BJ (cell line): ENCODE measurements at regions of chr1 and their contacts with region 1.

Region 1: DNA sequence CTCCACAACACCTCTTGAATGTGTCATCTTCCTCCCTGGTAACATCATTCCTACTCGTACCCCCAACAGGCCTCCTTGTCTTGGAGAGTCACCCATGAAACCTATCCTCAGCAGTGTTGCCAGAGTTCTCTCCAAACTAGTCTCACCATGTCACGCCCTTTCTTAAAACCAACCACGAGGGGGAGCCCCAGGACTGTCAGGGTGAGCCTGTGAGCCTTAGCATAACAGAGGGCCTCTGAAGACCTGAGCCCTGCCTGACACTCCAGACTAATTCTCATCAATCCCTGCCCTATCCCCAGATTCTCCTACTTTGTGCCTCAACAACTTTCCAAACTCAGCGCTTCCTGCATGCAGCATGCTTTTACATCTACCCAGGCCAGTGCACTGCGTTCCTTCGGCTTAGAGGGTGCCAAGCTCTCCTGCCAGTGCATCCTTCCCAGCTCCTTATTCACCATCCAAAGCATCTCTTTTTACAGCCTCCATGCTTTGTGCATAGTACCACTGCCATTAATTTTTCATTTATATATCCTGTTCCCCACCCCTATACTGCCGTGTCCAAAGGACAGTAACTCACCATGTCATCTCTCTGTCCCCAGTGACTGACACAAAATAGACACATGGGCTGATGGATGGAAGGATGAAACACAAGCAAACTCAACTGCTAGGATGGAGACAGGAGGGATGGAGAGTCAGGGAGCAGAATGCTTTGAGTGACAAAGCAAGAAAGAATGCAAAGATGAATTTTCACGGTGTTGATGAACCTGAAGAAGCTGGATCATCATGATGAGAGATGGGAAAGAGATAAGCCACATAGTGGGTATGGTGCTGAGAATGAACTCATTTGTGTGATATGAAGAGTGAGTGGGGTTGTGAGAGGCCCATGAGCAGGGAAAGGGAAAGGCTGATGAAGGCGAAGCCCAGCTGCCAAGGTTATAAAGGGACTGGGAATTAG is 34.0 kb downstream of the ZNF697 start:
- DNase-seq: no peak
- H3K4me3 ChIP-seq: no peak overlapping the region
- H3K27me3 ChIP-seq: no peaks in the 10 kb centered on the region
- CTCF ChIP-seq: peak; percentile 77

Region 2: GRCh38 chr1:119603695-119604094 is 10.3 kb before region 1 on chr1:
- CTCF ChIA-PET with region 1: interaction called, 19 read pairs
- POLR2A ChIA-PET with region 1: interaction called, 3 read pairs
- DNase-seq: no peak
- H3K4me3 ChIP-seq: no peak overlapping the region
- H3K27me3 ChIP-seq: no peaks in the 10 kb centered on the region
- CTCF ChIP-seq: no peak

Region 3: GRCh38 chr1:119639109-119639508 is 25.1 kb after region 1 on chr1:
- CTCF ChIA-PET with region 1: no interaction called
- POLR2A ChIA-PET with region 1: interaction called, 16 read pairs
- DNase-seq: no peak
- H3K4me3 ChIP-seq: no peak overlapping the region
- H3K27me3 ChIP-seq: no peaks in the 10 kb centered on the region
- CTCF ChIP-seq: no peak

Region 4: DNA sequence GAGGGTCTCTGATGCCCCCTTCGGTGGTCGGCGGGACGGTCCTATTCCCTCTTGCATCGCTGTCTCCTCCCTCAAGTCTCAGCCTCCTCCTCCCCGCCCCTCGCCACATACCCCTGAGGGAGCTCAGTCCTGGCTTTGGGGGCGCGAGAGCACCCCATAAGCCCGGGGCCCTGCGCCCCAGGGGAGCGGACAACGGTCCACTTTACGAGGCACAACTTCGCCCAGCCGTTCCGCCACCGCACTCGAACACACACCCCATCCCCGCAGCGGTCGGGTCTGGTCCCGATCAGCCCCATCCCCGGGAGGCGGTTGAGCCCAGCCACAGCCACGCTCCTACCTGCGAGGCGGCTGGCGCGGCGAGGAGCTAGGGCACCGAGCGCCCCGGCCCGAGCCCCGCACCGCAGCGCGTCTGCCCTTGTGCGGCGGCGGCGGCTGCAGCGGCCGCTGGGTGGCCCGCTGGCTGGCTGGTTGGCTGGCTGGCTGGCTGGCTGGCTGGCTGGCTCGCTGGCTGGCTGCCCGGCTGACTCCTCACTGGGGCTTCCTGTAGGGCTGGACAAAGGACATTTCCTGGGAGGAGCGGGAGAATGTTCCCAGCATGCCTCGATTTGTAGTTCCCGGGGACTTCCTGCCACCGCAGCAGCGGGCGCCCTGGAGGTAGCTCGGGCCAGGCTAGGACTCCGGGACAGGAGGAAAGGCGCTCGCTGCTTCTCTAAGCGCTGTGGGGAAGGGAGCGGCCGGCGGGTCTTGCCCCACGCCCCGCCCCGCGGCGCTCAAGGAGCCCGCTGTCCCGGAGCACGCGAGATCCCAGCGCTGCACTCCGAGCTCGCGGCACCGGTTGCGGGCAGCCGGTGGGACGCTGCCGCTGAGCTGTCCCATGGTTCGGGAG is 33.9 kb after region 1 on chr1 and contains the start of gene ZNF697:
- CTCF ChIA-PET with region 1: interaction called, 17 read pairs
- POLR2A ChIA-PET with region 1: interaction called, 4 read pairs
- DNase-seq: peak; percentile 90
- H3K4me3 ChIP-seq: peak within 1 kb of the TSS; percentile 85
- H3K27me3 ChIP-seq: no peaks in the 10 kb centered on the region
- CTCF ChIP-seq: peak; percentile 51; the same call in 1 of the 2 replicates
- polyA plus RNA-seq, gene ZNF697: 3.2 and 5.7 TPM in 2 replicates

Region 5: GRCh38 chr1:119656410-119656955 is 42.4 kb after region 1 on chr1:
- CTCF ChIA-PET with region 1: interaction called, 120 read pairs
- POLR2A ChIA-PET with region 1: no interaction called
- DNase-seq: no peak
- H3K4me3 ChIP-seq: no peak overlapping the region
- H3K27me3 ChIP-seq: no peaks in the 10 kb centered on the region
- CTCF ChIP-seq: no peak

Region 6: GRCh38 chr1:119662034-119662437 is 48.0 kb after region 1 on chr1:
- CTCF ChIA-PET with region 1: interaction called, 120 read pairs
- POLR2A ChIA-PET with region 1: no interaction called
- DNase-seq: no peak
- H3K4me3 ChIP-seq: no peak overlapping the region
- H3K27me3 ChIP-seq: no peaks in the 10 kb centered on the region
- CTCF ChIP-seq: no peak

Region 7: DNA sequence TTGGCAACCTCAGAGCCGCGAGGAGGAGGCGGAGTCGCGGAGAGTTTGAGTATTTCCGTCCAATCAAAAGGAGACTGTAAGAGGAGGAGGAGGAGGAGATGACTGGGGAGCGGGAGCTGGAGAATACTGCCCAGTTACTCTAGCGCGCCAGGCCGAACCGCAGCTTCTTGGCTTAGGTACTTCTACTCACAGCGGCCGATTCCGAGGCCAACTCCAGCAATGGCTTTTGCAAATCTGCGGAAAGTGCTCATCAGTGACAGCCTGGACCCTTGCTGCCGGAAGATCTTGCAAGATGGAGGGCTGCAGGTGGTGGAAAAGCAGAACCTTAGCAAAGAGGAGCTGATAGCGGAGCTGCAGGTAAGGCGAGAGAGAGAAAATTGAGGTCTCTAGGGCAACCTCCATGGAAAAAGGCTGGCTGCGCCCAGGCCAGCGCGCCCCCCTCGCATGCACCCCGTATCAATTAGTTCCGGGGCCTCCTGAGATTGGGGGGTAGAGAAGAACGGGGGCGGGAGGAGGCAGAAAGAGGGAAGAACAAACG is 97.8 kb after region 1 on chr1 and contains the start of gene PHGDH:
- CTCF ChIA-PET with region 1: interaction called, 4 read pairs
- POLR2A ChIA-PET with region 1: interaction called, 14 read pairs
- DNase-seq: peak; percentile 68
- H3K4me3 ChIP-seq: peak within 1 kb of the TSS; percentile 83
- H3K27me3 ChIP-seq: no peaks in the 10 kb centered on the region; the same call in 1 of the 2 replicates
- CTCF ChIP-seq: no peak
- polyA plus RNA-seq, gene PHGDH: 138 and 287 TPM in 2 replicates